ENCODE measurements at regions of chr22 and their contacts with region 1.

Region 1: DNA sequence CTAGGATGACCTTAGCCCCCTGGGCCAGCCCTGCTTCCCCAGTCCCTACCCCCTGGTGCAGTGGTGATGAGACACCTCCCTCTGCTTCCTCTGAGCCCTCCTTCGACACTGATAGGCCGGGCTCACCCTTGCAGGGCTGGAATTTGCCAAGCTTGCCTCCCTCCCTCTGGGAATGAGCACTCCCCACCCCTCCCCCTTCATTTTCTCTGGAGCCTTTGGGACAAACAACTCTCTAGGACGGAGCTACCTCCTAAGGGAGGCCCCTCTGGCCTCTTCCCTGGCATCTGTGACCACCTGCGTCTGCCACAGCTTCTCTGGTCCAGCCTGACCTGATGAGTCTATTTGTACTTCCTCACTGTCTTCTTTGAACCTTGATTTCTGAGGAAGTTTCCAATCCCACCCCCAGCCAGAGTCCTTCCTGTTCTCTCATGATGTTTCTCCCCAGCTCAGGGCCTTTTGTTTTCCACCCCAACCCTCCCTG is 53.3 kb upstream of the ADA2 start:
- DNase-seq: no peak
- ATAC-seq: no peak
- H3K4me3 ChIP-seq: no peak overlapping the region
- H3K27ac ChIP-seq: no peak overlapping the region
- H3K4me1 ChIP-seq: no peaks in the 10 kb centered on the region
- H3K27me3 ChIP-seq: no peaks in the 10 kb centered on the region
- CTCF ChIP-seq: no peak

Region 2: GRCh38 chr22:17258015-17258787 is 14.3 kb before region 1 on chr22:
- CTCF ChIA-PET with region 1: no interaction called
- POLR2A ChIA-PET with region 1: interaction called, 10 read pairs
- in situ Hi-C with region 1: no loop called
- intact Hi-C with region 1: no loop called
- DNase-seq: no peak
- ATAC-seq: no peak
- H3K4me3 ChIP-seq: no peak overlapping the region
- H3K27ac ChIP-seq: no peak overlapping the region
- H3K4me1 ChIP-seq: no peaks in the 10 kb centered on the region
- H3K27me3 ChIP-seq: no peaks in the 10 kb centered on the region
- CTCF ChIP-seq: no peak

Region 3: GRCh38 chr22:17303840-17304779 is 31.6 kb after region 1 on chr22:
- CTCF ChIA-PET with region 1: no interaction called
- POLR2A ChIA-PET with region 1: no interaction called
- in situ Hi-C with region 1: no loop called
- intact Hi-C with region 1: no loop called
- DNase-seq: no peak
- ATAC-seq: no peak; the same call in 1 of the 2 replicates
- H3K4me3 ChIP-seq: no peak overlapping the region
- H3K27ac ChIP-seq: no peak overlapping the region
- H3K4me1 ChIP-seq: no peaks in the 10 kb centered on the region
- H3K27me3 ChIP-seq: no peaks in the 10 kb centered on the region
- CTCF ChIP-seq: no peak

Region 4: GRCh38 chr22:18888115-18888514 is 1615.6 kb after region 1 on chr22:
- CTCF ChIA-PET with region 1: no interaction called
- POLR2A ChIA-PET with region 1: interaction called, 10 read pairs
- in situ Hi-C with region 1: no loop called
- intact Hi-C with region 1: no loop called
- DNase-seq: no peak
- ATAC-seq: no peak
- H3K4me3 ChIP-seq: no peak overlapping the region
- H3K27ac ChIP-seq: no peak overlapping the region
- H3K4me1 ChIP-seq: no peaks in the 10 kb centered on the region
- H3K27me3 ChIP-seq: no peaks in the 10 kb centered on the region
- CTCF ChIP-seq: no peak

Measured in Panc1 (cell line).